Activated T-helper 1 cell treated with anti-CD3 and anti-CD28 coated beads, Interleukin-12 subunit alpha, Interleukin-12 subunit beta, Interleukin-2, Interleukin-4 antibody, amounts not matched to agents 30 ng/mL and 10 ng/mL and 1 ng/mL, durations not matched to agents 14 hours and 24 hours and 36 hours (primary cell): ENCODE measurements at regions of chr5 and their contacts with region 1.

Region 1: DNA sequence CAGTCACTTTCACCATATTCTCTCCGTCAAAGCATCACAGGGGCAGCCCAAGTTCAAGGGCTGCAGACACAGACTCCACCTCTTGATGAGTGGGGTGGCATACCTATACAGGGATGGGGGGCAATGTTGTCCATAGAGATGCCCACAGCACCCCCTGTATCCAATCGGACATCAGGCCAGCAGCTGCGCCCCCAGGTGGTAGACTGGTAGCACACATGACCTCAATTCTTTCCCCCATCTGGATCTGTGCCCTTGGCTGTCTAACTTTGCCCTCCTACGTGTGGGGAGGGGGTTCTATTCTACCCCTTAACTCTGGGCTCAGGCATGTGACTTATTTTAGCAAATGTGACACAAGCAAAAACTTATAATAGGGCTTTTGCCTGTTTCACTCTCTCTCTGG is 84.0 kb upstream of the SLC25A48 start:
- DNase-seq: no peak
- H3K4me3 Mint-ChIP-seq: no peak overlapping the region
- H3K27ac Mint-ChIP-seq: no peak overlapping the region
- H3K4me1 Mint-ChIP-seq: no peaks in the 10 kb centered on the region
- H3K27me3 Mint-ChIP-seq: peaks cover 1% of the 10 kb centered on the region

Region 2: DNA sequence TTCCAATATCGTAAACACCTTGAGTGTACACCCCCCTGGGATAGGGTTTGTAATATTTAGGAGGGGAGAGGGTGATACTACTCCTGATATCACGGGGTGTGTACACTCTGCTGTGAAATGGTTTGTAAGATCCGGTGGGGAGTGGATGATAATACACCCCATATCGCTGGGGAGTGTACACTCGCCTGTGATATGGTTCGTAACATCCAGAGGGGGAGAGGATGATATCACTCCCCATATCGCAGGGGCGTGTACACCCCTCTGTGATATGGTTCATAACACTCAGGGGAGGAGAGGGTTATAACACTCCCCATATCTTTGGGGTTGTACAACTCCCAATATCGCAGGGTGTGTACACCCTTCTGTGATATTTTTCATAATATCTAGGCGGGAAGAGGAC is 50.1 kb after region 1 on chr5:
- intact Hi-C with region 1: loop called (anchors 10 kb)
- DNase-seq: no peak
- H3K4me3 Mint-ChIP-seq: no peak overlapping the region
- H3K27ac Mint-ChIP-seq: no peak overlapping the region
- H3K4me1 Mint-ChIP-seq: no peaks in the 10 kb centered on the region
- H3K27me3 Mint-ChIP-seq: no peaks in the 10 kb centered on the region

Region 3: GRCh38 chr5:136123236-136123768 is 372.8 kb after region 1 on chr5:
- intact Hi-C with region 1: no loop called
- DNase-seq: no peak
- H3K4me3 Mint-ChIP-seq: no peak overlapping the region
- H3K27ac Mint-ChIP-seq: no peak overlapping the region
- H3K4me1 Mint-ChIP-seq: no peaks in the 10 kb centered on the region
- H3K27me3 Mint-ChIP-seq: peaks cover 30% of the 10 kb centered on the region